Sciatic nerve (tissue), 2 donors: ENCODE measurements at regions of chr16 and their contacts with region 1.

Region 1: DNA sequence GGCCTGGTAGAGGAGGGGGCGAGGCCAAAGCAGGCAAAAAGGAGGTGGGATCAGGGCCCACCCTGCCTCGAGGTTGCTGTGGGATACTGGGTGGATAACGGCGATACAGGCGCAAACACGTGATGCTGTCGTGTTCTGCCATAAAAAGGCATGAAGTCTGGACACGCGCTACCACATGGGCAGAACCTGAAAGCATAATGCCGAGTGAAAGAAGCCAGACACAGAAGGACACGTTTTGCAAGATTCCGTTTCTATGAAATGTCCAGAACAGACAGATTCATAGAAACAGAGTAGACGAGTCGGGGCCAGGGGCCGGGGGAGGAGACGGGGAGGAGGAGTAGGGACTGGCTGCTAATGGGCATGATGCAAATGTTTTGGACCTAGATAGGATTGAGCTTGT is 43.5 kb downstream of the ZDHHC7 start:
- DNase-seq: no peak
- ATAC-seq: no peak

Region 2: DNA sequence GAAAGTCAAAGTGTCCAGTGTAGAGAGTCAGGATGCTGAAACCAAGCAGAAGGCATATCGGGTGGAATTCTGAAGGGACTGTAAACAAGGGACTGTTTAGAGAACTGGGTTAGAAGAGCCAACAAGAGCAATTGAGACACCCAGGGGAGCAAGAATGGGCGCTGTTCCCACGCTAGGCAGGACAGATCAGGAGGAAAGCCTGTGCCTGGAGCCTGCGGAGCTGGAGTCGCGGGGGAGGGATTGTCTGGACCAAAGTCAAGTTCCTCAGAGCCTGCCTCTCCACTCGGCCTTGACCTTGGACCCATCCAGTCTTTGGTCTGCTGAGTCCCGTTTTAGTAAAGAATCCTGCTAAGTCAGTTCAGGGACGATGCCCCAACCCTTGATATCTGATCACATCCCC is 334.2 kb before region 1 on chr16:
- intact Hi-C with region 1: loop called (anchors 10 kb)
- DNase-seq: peak; percentile 87
- ATAC-seq: peak; percentile 94

Region 3: DNA sequence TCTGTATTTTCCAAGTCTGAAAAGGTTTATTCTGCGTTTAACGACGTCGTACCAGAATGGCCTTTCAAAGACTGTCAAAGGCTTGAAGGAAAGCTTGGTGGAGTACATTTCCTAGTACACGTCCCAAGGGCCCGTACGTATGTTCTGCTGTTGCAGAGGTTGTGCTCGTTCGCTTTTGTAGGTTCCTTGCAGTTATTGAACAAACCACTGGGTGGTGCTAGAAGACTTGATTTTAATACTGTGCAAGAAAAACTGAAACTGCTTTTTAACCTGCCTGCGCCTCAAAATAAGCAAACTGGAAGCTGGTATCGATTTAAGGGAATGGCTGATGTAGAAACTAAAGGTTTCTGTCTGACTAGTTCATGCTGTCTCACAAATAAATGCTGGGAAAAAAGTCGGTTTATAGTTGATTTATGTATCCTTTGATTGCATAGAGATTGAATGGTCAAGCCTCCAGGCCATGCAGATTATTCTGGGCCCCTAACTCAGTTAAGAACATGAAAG is 213.4 kb before region 1 on chr16:
- intact Hi-C with region 1: loop called (anchors 5 kb)
- DNase-seq: no peak
- ATAC-seq: peak; percentile 81

Region 4: DNA sequence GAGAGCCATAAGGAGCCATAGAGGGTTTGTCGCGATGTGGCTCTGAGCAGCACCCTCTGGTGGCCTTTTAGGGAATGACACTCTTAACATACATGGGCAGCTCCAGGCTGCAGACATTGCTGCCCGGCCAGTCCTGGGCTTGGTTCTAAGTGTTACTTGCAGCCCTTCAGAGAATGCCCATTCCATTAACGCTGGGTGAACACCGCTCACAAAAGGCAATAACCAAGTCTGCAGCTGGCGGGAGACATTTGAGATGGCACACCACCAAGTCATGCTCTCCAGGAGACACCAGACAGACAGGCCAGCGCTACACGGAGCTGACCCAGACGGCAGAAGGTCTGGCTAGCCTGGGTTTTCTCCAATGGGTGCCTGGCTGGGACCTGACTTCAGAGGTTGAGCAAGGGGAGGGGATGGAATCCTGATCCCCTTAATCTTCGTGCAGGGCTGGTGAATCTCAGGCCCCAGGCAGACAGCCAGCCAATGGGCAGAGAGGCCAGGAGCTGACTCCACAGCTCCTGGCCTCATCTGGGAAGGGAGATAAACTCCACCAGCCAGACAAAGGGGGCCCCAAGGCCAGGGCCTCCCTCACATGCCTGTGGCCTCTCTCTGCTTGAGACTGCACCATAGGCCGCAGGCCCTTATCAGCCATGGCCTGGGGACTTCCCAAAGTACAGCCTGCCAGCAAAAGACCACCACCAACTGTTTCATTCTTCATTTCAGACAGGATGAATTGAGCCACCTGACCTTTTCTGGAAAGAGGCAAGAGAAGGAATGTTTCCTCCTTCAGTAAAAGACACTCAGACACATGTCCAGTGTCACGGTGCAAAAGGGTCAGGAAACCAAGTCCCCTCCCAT is 15.3 kb before region 1 on chr16:
- intact Hi-C with region 1: no loop called
- DNase-seq: peak; percentile 86
- ATAC-seq: peak; percentile 90